OCI-LY7 (cell line): ENCODE measurements at regions of chr3 and their contacts with region 1.

Region 1: DNA sequence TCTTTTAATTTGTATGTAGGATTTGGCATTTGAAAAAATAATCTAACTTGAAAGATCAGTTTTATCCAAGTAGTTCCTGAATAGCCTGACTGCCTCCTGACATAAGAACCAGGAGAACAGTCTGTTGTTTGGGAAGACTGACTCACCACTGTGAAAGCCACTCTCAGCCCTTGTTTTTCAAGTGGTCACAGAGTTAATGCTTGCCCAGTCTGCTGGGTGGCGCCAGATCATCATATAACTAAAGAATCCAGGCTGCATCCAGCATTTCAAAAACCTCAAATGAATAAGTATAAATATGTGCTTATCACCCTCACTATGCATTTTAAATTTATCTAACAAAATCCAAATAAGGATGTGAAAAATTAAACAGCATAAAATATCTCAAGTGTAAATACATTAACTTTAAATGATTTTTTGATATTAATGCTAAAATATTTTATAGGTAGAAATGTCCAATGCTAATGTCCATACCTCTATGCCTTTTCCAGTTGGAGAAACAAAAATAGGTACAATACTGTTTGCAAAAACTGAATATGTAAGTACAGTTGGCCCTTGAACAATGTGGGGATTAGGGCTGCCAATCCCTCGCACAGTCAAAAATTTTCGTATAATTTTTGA is 26.9 kb upstream of the ZBBX start:
- DNase-seq: peak; percentile 41
- H3K4me3 ChIP-seq: no peak overlapping the region
- H3K27ac ChIP-seq: no peak overlapping the region
- H3K4me1 ChIP-seq: no peaks in the 10 kb centered on the region
- CTCF ChIP-seq: peak; percentile 74

Region 2: DNA sequence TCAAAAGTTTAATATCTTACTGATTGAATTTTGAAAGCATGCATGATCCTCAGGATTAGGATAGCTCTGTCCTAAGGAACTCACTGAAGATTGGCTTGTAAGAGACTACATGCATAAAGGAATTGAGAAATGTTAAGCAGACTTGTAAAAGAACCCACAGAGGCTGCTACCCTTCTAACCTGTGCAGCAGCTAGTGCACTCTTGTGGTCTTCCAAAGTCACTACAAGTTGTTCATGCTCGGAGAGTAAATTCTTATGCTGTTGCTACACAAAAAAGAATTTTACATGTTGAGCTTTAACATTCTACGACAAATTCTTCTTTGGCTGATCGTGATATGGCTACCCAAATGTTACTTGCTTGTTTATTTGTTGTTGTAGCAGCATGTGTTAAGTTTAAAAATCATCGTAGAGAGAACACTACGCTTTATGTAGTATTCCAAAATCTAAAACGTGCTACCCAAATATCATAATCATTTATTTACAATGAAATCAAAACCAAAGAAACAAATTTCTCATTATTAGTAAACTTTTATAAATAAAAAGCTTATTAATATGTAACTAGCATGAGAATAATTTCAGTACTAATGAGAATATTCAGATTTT is 633.7 kb after region 1 on chr3:
- CTCF ChIA-PET with region 1: no interaction called
- POLR2A ChIA-PET with region 1: no interaction called
- intact Hi-C with region 1: loop called (anchors 2 kb)
- DNase-seq: peak; percentile 63
- H3K4me3 ChIP-seq: no peak overlapping the region
- H3K27ac ChIP-seq: no peak overlapping the region
- H3K4me1 ChIP-seq: no peaks in the 10 kb centered on the region
- CTCF ChIP-seq: peak; percentile 87